Caco-2 (cell line): ENCODE measurements at regions of chr2 and their contacts with region 1.

Region 1: GRCh38 chr2:189580658-189581353 is at the start of gene SLC40A1:
- DNase-seq: peak; percentile 89 to 96
- H3K4me3 ChIP-seq: peak within 1 kb of the TSS; percentile 66
- H3K4me3 Mint-ChIP-seq: peak within 1 kb of the TSS; percentile 99
- H3K27ac Mint-ChIP-seq: peak within 1 kb of the TSS; percentile 88
- H3K4me1 ChIP-seq: peaks cover 51% of the 10 kb centered on the region
- H3K4me1 Mint-ChIP-seq: peaks cover 48% of the 10 kb centered on the region
- H3K27me3 ChIP-seq: no peaks in the 10 kb centered on the region
- H3K27me3 Mint-ChIP-seq: no peaks in the 10 kb centered on the region
- CTCF ChIP-seq: no peak
- total RNA-seq, gene SLC40A1: 78.1 and 109 TPM in 2 replicates

Region 2: GRCh38 chr2:188919824-188920223 is 661.0 kb before region 1 on chr2:
- CTCF ChIA-PET with region 1: no interaction called
- POLR2A ChIA-PET with region 1: no interaction called
- intact Hi-C with region 1: no loop called
- DNase-seq: no peak
- H3K4me3 ChIP-seq: no peak overlapping the region
- H3K4me3 Mint-ChIP-seq: no peak overlapping the region
- H3K27ac Mint-ChIP-seq: no peak overlapping the region
- H3K4me1 ChIP-seq: no peaks in the 10 kb centered on the region
- H3K4me1 Mint-ChIP-seq: no peaks in the 10 kb centered on the region
- H3K27me3 ChIP-seq: no peaks in the 10 kb centered on the region
- H3K27me3 Mint-ChIP-seq: no peaks in the 10 kb centered on the region
- CTCF ChIP-seq: no peak

Region 3: DNA sequence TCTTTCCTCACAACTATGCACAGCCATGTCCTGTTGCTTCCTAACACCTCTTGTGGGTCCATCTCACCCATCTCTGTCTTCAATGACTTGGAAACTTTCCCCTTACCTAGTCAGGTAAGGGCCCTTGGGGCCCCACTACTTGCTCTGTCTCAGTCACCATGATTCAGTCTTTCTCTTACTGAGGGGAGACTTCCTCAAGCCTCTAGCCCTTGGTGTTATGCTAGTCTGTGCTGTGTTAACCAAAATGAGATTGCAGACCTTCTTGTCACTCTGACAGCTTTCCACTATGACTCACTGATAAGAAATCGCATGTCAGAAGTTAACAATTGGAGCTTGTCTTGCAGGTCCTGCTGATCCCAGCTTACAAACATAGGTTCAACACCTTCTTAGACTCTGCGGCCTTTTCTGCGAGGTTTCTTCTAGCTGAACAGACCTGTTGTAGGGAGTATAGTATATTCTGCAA is 74.3 kb before region 1 on chr2:
- CTCF ChIA-PET with region 1: interaction called, 4 read pairs
- POLR2A ChIA-PET with region 1: interaction called, 14 read pairs
- intact Hi-C with region 1: loop called (anchors 1 kb)
- DNase-seq: peak; percentile 66 to 69
- H3K4me3 ChIP-seq: no peak overlapping the region
- H3K4me3 Mint-ChIP-seq: peak overlapping the region; percentile 32
- H3K27ac Mint-ChIP-seq: peak overlapping the region; percentile 93
- H3K4me1 ChIP-seq: peaks cover 33% of the 10 kb centered on the region
- H3K4me1 Mint-ChIP-seq: peaks cover 25% of the 10 kb centered on the region
- H3K27me3 ChIP-seq: no peaks in the 10 kb centered on the region
- H3K27me3 Mint-ChIP-seq: no peaks in the 10 kb centered on the region
- CTCF ChIP-seq: no peak

Region 4: DNA sequence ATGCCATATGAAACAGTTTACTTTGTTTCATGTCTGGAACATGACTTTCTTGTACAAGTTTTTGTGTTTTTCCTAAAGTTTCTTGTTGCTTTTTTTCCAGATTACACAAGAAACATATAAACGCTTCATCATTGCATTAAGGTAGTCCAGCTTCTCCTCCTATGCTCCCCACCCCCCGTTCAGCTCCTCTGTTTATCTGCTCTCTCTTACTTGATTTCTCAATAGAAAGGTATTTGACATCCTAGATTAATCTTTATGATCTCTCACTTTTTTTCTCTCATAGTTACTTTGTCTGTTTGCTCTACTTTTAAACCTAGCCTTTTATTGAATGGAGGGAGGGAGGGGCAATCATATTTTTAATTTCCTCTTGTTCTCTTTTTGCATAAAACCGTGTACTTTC is 25.6 kb before region 1 on chr2:
- CTCF ChIA-PET with region 1: no interaction called
- POLR2A ChIA-PET with region 1: interaction called, 14 read pairs
- intact Hi-C with region 1: loop called (anchors 1 kb)
- DNase-seq: peak; percentile 77 to 90
- H3K4me3 ChIP-seq: no peak overlapping the region
- H3K4me3 Mint-ChIP-seq: peak overlapping the region; percentile 52
- H3K27ac Mint-ChIP-seq: peak overlapping the region; percentile 70
- H3K4me1 ChIP-seq: peaks cover 85% of the 10 kb centered on the region
- H3K4me1 Mint-ChIP-seq: peaks cover 43% of the 10 kb centered on the region
- H3K27me3 ChIP-seq: no peaks in the 10 kb centered on the region
- H3K27me3 Mint-ChIP-seq: no peaks in the 10 kb centered on the region
- CTCF ChIP-seq: no peak

Region 5: GRCh38 chr2:189621781-189622180 is 41.0 kb after region 1 on chr2:
- CTCF ChIA-PET with region 1: interaction called, 3 read pairs
- POLR2A ChIA-PET with region 1: interaction called, 4 read pairs
- intact Hi-C with region 1: loop called (anchors 2 kb)
- DNase-seq: no peak
- H3K4me3 ChIP-seq: no peak overlapping the region
- H3K4me3 Mint-ChIP-seq: no peak overlapping the region
- H3K27ac Mint-ChIP-seq: no peak overlapping the region
- H3K4me1 ChIP-seq: peaks cover 37% of the 10 kb centered on the region
- H3K4me1 Mint-ChIP-seq: peaks cover 17% of the 10 kb centered on the region
- H3K27me3 ChIP-seq: no peaks in the 10 kb centered on the region
- H3K27me3 Mint-ChIP-seq: no peaks in the 10 kb centered on the region
- CTCF ChIP-seq: no peak

Region 6: DNA sequence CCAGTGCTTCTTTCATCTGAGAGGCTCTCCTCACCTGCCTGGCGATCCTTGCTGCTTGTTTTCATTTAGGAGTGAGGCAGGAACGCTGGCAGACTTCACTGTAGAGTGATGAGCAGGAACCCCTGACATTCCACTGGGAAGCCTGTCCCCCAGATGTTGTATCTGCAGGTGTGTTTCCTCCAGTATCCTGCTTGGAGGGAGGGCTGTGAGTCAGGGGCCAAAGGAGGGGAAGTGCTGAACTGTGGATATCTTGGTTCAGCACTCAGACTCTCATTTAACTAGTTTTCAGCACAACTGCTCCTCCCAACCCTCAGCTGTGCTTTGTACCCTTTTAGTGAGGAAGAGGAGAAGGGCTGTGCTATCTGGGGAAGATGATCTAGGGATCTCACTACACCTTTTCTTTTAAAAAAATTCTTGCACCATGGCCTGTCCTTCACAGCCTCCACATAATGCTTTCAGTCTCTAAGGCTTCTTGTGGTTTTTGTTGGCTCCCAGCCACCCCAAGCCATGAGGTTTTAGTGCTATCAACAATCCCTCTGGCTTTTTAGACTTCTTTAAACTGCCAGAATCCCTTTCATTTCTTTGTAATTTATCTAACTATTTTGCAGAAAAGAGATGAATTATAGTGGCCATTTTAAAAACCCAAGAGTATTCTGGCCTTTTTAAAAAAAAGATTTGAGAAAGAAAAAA is 104.9 kb after region 1 on chr2:
- CTCF ChIA-PET with region 1: no interaction called
- POLR2A ChIA-PET with region 1: no interaction called
- intact Hi-C with region 1: no loop called
- DNase-seq: no peak
- H3K4me3 ChIP-seq: no peak overlapping the region
- H3K4me3 Mint-ChIP-seq: no peak overlapping the region
- H3K27ac Mint-ChIP-seq: no peak overlapping the region
- H3K4me1 ChIP-seq: no peaks in the 10 kb centered on the region
- H3K4me1 Mint-ChIP-seq: no peaks in the 10 kb centered on the region
- H3K27me3 ChIP-seq: no peaks in the 10 kb centered on the region
- H3K27me3 Mint-ChIP-seq: no peaks in the 10 kb centered on the region
- CTCF ChIP-seq: no peak

Region 7: DNA sequence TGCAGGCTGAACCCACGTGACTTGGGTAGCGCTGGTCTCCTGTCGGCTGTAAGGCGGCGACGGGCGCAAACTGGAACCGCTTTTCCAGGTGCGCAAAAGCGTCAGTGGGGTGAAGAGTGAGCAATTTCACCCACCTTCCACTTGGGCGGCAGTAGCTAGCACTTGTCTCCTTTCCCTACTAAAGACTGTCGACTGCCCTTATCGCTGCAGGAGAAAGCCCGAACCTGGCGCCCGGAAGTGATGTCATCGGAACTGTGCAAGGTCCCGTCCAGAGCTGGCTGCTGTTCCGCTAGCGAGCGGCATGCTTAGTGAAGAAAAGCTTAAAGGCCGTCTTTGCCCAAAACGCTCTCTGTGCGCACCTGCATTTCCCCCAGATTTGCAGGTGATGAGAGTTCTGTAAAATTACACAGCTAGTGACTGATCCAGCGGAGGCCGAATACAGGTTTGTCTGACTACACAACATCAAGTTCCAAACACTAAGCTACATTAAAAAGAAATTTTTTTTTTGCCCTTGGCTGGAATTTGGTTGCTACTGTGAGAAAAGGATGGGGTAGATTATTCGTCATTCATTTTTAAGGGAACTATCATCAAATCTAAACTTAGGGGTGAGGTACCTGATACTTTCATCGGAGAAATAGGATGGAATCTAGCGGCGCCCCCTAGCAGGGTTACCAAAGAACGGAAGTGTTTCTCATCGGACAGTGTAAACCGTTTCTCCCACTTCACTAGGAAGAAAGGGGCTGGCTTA is 181.9 kb after region 1 on chr2 and contains the start of gene OSGEPL1:
- CTCF ChIA-PET with region 1: no interaction called
- POLR2A ChIA-PET with region 1: interaction called, 5 read pairs
- intact Hi-C with region 1: loop called (anchors 10 kb)
- DNase-seq: peak; percentile 95 to 97
- H3K4me3 ChIP-seq: peak within 1 kb of the TSS; percentile 48
- H3K4me3 Mint-ChIP-seq: peak within 1 kb of the TSS; percentile 98
- H3K27ac Mint-ChIP-seq: peak within 1 kb of the TSS; percentile 87
- H3K4me1 ChIP-seq: peaks cover 8% of the 10 kb centered on the region; the same call in 1 of the 2 replicates
- H3K4me1 Mint-ChIP-seq: no peaks in the 10 kb centered on the region
- H3K27me3 ChIP-seq: no peaks in the 10 kb centered on the region
- H3K27me3 Mint-ChIP-seq: no peaks in the 10 kb centered on the region
- CTCF ChIP-seq: peak; percentile 47 to 74
- total RNA-seq, gene OSGEPL1: 5.0 and 5.3 TPM in 2 replicates

Region 8: GRCh38 chr2:189899101-189899500 is 318.3 kb after region 1 on chr2:
- CTCF ChIA-PET with region 1: no interaction called
- POLR2A ChIA-PET with region 1: no interaction called
- intact Hi-C with region 1: no loop called
- DNase-seq: no peak
- H3K4me3 ChIP-seq: no peak overlapping the region
- H3K4me3 Mint-ChIP-seq: no peak overlapping the region
- H3K27ac Mint-ChIP-seq: no peak overlapping the region
- H3K4me1 ChIP-seq: no peaks in the 10 kb centered on the region
- H3K4me1 Mint-ChIP-seq: no peaks in the 10 kb centered on the region
- H3K27me3 ChIP-seq: no peaks in the 10 kb centered on the region
- H3K27me3 Mint-ChIP-seq: peaks cover 6% of the 10 kb centered on the region
- CTCF ChIP-seq: no peak